ENCODE measurements at regions of chr10 and their contacts with region 1.

Region 1: GRCh38 chr10:88624840-88625239 is 38.3 kb downstream of the LIPJ start:
- DNase-seq: no peak
- H3K4me3 ChIP-seq: no peak overlapping the region
- H3K27ac ChIP-seq: no peak overlapping the region
- H3K4me1 ChIP-seq: no peaks in the 10 kb centered on the region
- H3K27me3 ChIP-seq: no peaks in the 10 kb centered on the region
- CTCF ChIP-seq: no peak
- POLR2A ChIP-seq: no peak

Region 2: GRCh38 chr10:89889606-89890005 is 1264.8 kb after region 1 on chr10:
- CTCF ChIA-PET with region 1: no interaction called
- POLR2A ChIA-PET with region 1: no interaction called
- dilution Hi-C with region 1: no loop called
- intact Hi-C with region 1: loop called (anchors 5 kb)
- DNase-seq: no peak
- H3K4me3 ChIP-seq: no peak overlapping the region
- H3K27ac ChIP-seq: no peak overlapping the region
- H3K4me1 ChIP-seq: no peaks in the 10 kb centered on the region
- H3K27me3 ChIP-seq: peaks cover 0 to 1% of the 10 kb centered on the region in 2 experiments
- CTCF ChIP-seq: no peak
- POLR2A ChIP-seq: no peak